Head of caudate nucleus (tissue), 42 donors: ENCODE measurements at regions of chr5 and their contacts with region 1.

Region 1: DNA sequence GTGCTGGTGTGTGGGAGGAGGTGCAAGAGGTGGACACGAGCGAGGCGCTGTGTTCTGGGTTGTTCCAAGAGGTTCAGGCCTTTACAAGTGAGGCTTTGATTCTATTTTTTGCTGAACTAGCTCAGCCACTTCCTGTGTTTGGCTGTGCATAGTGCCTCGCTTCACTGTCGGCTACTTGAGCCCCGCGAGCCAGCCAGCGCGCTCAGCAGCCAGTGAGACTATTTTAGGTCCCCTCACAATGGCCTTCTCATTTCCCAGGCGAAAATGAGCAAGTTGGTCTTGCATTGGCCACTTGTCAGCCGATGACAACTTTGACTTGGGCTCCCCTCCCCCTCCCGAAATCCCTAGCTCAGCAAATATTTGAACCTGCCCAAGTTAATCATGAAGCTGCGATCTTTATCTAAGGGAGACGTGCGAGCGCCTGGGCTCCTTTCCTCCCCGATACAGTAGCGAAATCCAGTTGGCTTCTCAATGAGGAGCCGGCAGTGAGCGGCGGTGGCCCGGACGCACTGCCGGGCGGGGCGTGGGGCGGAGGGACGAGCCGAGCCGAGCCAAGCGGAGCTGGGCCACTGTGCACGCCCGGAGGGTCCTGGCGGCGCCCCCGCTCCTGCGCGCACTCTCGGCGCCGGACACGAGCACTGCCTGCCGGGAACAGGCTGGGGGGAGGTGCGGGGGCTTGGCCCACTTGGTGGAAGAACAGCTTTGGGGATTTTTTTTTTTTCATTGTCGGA is 72.6 kb downstream of the PIK3R1 start:
- DNase-seq: peak; percentile 66 to 94 (median 83)

Region 2: DNA sequence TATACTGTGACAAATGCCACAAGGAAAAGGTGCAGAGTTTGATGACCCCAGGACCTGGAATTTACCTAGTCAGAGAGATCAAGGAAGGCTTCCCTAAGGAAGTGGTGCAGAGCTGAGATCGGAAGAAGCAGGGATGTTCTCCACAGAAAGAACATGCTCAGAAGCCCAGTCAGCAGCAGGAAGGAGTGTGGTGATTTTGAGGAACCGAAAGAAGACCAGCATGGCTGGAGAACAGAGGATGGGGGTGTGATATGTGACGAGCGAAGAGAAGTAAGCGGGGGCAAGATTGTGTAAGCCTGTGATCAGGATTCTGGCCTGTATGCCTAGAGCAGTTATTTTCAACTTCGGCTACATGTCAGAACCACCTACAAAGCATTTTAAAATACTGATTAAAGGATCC is 91.3 kb before region 1 on chr5:
- intact Hi-C with region 1: no loop called
- DNase-seq: peak in 22 of 42 donors; percentile 18 to 66 (median 42)

Region 3: GRCh38 chr5:68456756-68457217 is 168.6 kb after region 1 on chr5:
- intact Hi-C with region 1: loop called (anchors 5 kb)
- DNase-seq: peak in 1 of 42 donors; percentile 9